ENCODE measurements at regions of chr1 and their contacts with region 1.

Region 1: GRCh38 chr1:167270349-167271092 is 49.8 kb downstream of the POU2F1 start:
- DNase-seq: no peak
- ATAC-seq: no peak
- H3K4me3 Mint-ChIP-seq: no peak overlapping the region
- H3K27ac Mint-ChIP-seq: no peak overlapping the region
- H3K4me1 Mint-ChIP-seq: peaks cover 22% of the 10 kb centered on the region
- H3K27me3 Mint-ChIP-seq: no peaks in the 10 kb centered on the region

Region 2: GRCh38 chr1:167249702-167250101 is 20.8 kb before region 1 on chr1:
- CTCF ChIA-PET with region 1: interaction called, 20 read pairs
- DNase-seq: no peak
- ATAC-seq: peak; percentile 73
- H3K4me3 Mint-ChIP-seq: no peak overlapping the region
- H3K27ac Mint-ChIP-seq: no peak overlapping the region
- H3K4me1 Mint-ChIP-seq: peaks cover 26% of the 10 kb centered on the region
- H3K27me3 Mint-ChIP-seq: no peaks in the 10 kb centered on the region

Region 3: GRCh38 chr1:167401260-167401873 is 130.8 kb after region 1 on chr1:
- CTCF ChIA-PET with region 1: interaction called, 12 read pairs
- DNase-seq: peak; percentile 74
- ATAC-seq: peak; percentile 89
- H3K4me3 Mint-ChIP-seq: no peak overlapping the region
- H3K27ac Mint-ChIP-seq: no peak overlapping the region
- H3K4me1 Mint-ChIP-seq: peaks cover 3% of the 10 kb centered on the region
- H3K27me3 Mint-ChIP-seq: no peaks in the 10 kb centered on the region

Region 4: DNA sequence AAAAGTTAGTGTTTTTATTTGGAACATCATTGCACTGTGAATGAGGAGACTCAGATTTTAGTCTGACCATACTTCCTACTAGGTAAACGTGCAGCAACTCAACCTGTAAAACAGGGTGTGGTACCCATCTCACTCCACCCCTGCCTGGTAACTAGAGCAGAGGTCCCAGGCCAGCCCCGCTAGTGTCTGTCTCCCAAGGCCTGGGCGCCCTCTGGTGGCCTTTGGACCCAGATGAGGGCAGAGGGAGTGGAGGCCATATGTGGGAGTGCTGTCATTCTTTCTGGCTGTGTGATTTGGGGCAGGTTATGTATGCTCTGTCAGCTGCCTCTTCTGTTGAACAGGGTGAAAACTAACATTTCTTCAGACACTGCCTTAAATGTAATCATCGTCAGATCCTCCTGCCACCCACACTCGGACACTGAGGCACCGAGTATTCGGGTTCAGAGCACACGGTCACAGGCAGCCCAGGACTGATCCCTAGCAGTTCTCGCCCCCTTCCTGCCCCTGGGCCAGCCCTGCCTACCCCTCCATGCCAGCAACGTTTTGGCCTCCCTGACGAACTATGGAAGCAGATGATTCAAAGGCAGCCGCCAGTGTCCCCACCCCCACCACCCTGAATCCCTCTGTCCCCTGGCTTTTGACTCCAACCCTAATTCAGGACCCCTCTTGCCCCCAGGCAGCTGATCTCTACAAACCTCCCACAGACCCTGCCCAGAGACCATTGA is 171.8 kb after region 1 on chr1:
- CTCF ChIA-PET with region 1: interaction called, 11 read pairs
- DNase-seq: peak; percentile 85
- ATAC-seq: peak; percentile 83
- H3K4me3 Mint-ChIP-seq: no peak overlapping the region
- H3K27ac Mint-ChIP-seq: peak overlapping the region; percentile 31
- H3K4me1 Mint-ChIP-seq: peaks cover 81% of the 10 kb centered on the region
- H3K27me3 Mint-ChIP-seq: no peaks in the 10 kb centered on the region